Activated CD8-positive, alpha-beta T cell treated with anti-CD3 and anti-CD28 coated beads for 36 hours (primary cell): ENCODE measurements at regions of chr4 and their contacts with region 1.

Region 1: DNA sequence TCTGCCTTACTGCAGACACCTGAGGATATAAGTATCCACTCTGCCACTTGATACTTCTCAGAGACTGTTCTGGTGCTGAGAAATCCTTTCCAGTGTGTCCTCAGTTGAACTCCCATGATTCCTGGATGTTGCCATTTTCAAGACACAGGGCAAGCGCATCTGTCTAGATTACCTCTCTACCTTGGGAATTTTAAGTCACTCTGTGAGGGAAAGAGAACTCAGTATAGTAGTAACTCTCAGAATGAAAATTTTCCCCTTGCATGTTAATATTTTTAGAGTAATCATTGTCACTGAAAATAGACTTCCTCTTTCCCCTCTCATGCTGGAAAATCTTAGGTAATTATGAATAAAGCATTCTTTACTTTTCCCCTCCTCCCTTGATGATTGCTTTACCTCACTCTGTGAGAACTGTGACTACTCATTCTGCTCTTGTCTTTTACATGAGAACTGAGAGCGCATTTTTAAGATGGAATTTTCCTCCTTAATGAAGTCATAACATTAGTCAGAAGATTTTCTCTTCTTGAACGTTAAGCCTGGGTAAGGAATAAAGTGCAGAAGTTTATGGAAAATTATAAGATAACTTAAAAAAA is 45.0 kb downstream of the TET2 start:
- DNase-seq: no peak
- ATAC-seq: peak; percentile 71
- H3K4me3 Mint-ChIP-seq: peak overlapping the region; percentile 4
- H3K27ac Mint-ChIP-seq: peak overlapping the region; percentile 87
- H3K4me1 Mint-ChIP-seq: peaks cover 87% of the 10 kb centered on the region
- H3K27me3 Mint-ChIP-seq: no peaks in the 10 kb centered on the region
- CTCF ChIP-seq: no peak

Region 2: GRCh38 chr4:105166066-105166465 is 25.6 kb before region 1 on chr4:
- CTCF ChIA-PET with region 1: no interaction called
- POLR2A ChIA-PET with region 1: no interaction called
- intact Hi-C with region 1: no loop called
- DNase-seq: no peak
- ATAC-seq: no peak
- H3K4me3 Mint-ChIP-seq: no peak overlapping the region
- H3K27ac Mint-ChIP-seq: no peak overlapping the region
- H3K4me1 Mint-ChIP-seq: peaks cover 37% of the 10 kb centered on the region
- H3K27me3 Mint-ChIP-seq: no peaks in the 10 kb centered on the region
- CTCF ChIP-seq: no peak

Region 3: GRCh38 chr4:105181259-105181658 is 10.5 kb before region 1 on chr4:
- CTCF ChIA-PET with region 1: no interaction called
- POLR2A ChIA-PET with region 1: no interaction called
- intact Hi-C with region 1: no loop called
- DNase-seq: no peak
- ATAC-seq: no peak
- H3K4me3 Mint-ChIP-seq: no peak overlapping the region
- H3K27ac Mint-ChIP-seq: peak overlapping the region; percentile 12
- H3K4me1 Mint-ChIP-seq: peaks cover 36% of the 10 kb centered on the region
- H3K27me3 Mint-ChIP-seq: no peaks in the 10 kb centered on the region
- CTCF ChIP-seq: no peak

Region 4: DNA sequence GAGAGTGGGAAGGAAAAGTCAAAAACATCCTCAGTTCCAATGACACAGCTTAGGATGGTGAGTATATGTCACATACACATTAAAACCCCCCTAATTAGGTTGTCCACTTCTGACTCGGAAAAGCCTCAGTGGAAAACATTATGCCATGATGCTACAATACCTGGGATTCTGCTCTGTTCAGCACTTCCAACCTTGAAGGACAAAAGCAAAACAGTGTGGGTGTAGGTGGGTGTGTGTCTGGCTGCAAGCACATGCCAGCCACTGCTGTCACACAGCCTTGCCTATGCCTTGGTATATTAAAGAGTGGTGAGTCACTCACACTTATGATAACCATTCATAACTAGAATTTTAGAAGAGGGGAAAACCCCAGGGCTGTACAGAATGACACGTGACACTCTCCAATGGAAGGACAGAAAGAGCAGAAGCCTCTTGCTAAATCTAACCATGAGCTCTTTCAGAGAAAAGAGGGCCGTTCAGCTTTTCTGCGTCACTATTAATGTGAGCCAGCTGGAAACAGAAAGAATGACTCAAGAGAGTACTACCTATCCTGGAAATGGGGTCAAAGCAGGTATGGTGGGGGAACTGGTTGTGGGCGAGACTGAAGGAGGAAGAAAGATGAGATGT is 114.6 kb after region 1 on chr4:
- CTCF ChIA-PET with region 1: interaction called, 3 read pairs
- POLR2A ChIA-PET with region 1: no interaction called
- intact Hi-C with region 1: loop called (anchors 1 kb)
- DNase-seq: peak; percentile 86
- ATAC-seq: peak; percentile 83
- H3K4me3 Mint-ChIP-seq: no peak overlapping the region
- H3K27ac Mint-ChIP-seq: peak overlapping the region; percentile 92
- H3K4me1 Mint-ChIP-seq: peaks cover 25% of the 10 kb centered on the region
- H3K27me3 Mint-ChIP-seq: no peaks in the 10 kb centered on the region
- CTCF ChIP-seq: no peak